ENCODE measurements at regions of chr3 and their contacts with region 1.

Region 1: GRCh38 chr3:184727357-184728009 is 15.6 kb upstream of the MAGEF1 start:
- DNase-seq: peak in 8 of 9 donors; percentile 12 to 45 (median 34)
- ATAC-seq: peak; percentile 85
- H3K4me3 ChIP-seq: no peak overlapping the region
- H3K4me3 Mint-ChIP-seq: no peak overlapping the region
- H3K27ac ChIP-seq: no peak overlapping the region
- H3K27ac Mint-ChIP-seq: peak overlapping the region in 2 of 9 donors; percentile 37 to 44
- H3K4me1 ChIP-seq: no peaks in the 10 kb centered on the region
- H3K4me1 Mint-ChIP-seq: peaks cover 0 to 4% (median 0%) of the 10 kb centered on the region in 7 donors
- H3K27me3 ChIP-seq: no peaks in the 10 kb centered on the region
- H3K27me3 Mint-ChIP-seq: peaks cover 0 to 39% (median 6%) of the 10 kb centered on the region in 5 donors

Region 2: DNA sequence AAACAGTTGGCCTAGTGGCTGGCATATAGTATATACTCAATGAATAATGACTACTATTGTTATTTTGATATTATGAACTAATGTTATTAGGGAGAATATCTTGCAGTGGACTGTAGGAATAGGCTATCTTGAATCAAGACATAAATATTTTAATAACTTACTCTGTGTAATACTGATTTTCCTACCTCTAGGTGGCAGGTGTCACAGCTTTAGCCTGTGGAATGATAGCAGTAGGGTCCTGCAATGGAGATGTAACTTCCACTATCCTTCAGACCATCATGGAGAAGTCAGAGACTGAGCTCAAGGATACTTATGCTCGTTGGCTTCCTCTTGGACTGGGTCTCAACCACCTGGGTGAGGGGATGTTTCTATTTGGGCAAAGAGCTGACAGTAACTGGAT is 421.9 kb before region 1 on chr3:
- CTCF ChIA-PET with region 1: no interaction called
- POLR2A ChIA-PET with region 1: no interaction called
- intact Hi-C with region 1: no loop called
- DNase-seq: no peak
- ATAC-seq: peak; percentile 47
- H3K4me3 ChIP-seq: no peak overlapping the region
- H3K4me3 Mint-ChIP-seq: no peak overlapping the region
- H3K27ac ChIP-seq: no peak overlapping the region
- H3K27ac Mint-ChIP-seq: peak overlapping the region in 1 of 9 donors; percentile 48
- H3K4me1 ChIP-seq: peaks cover 0 to 3% of the 10 kb centered on the region in 2 donors
- H3K4me1 Mint-ChIP-seq: peaks cover 2 to 17% (median 12%) of the 10 kb centered on the region in 7 donors
- H3K27me3 ChIP-seq: no peaks in the 10 kb centered on the region
- H3K27me3 Mint-ChIP-seq: no peaks in the 10 kb centered on the region

Region 3: DNA sequence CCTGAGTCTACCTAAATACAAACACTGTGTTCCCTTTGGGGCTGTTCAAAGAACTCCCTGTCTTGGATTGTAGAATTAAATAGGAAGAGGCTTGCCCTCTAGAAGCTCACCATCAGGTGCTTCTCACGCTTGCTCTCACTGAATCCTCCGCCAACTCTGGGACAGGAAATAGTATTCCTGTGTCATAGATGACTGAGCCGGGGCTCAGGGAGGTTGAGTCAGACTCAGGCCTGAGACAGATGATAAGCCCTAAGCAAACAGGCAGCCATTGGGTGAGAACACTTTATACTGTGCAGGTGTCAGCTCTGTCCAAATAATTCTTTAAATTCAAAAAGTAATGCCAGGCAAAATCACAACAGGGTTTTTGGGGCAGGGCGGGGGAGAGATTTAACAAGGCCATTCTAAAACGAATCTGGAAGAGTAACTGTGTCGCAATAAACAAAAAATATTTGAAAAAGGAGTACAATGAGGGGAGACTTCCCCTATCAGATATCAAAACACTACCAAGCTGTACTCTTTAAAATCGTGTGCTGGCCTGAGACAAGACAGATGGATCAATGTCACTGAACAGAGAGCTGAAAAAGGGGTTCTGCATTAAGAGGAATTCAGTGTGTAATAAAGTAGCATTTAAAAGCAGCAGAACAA is 106.9 kb before region 1 on chr3:
- CTCF ChIA-PET with region 1: no interaction called
- POLR2A ChIA-PET with region 1: no interaction called
- intact Hi-C with region 1: no loop called
- DNase-seq: no peak
- ATAC-seq: peak; percentile 44
- H3K4me3 ChIP-seq: no peak overlapping the region
- H3K4me3 Mint-ChIP-seq: no peak overlapping the region
- H3K27ac ChIP-seq: no peak overlapping the region
- H3K27ac Mint-ChIP-seq: peak overlapping the region in 1 of 9 donors; percentile 22
- H3K4me1 ChIP-seq: peaks cover 11 to 12% of the 10 kb centered on the region in 2 donors
- H3K4me1 Mint-ChIP-seq: peaks cover 8 to 21% (median 14%) of the 10 kb centered on the region in 7 donors
- H3K27me3 ChIP-seq: no peaks in the 10 kb centered on the region
- H3K27me3 Mint-ChIP-seq: peaks cover 7 to 40% (median 11%) of the 10 kb centered on the region in 5 donors

Region 4: DNA sequence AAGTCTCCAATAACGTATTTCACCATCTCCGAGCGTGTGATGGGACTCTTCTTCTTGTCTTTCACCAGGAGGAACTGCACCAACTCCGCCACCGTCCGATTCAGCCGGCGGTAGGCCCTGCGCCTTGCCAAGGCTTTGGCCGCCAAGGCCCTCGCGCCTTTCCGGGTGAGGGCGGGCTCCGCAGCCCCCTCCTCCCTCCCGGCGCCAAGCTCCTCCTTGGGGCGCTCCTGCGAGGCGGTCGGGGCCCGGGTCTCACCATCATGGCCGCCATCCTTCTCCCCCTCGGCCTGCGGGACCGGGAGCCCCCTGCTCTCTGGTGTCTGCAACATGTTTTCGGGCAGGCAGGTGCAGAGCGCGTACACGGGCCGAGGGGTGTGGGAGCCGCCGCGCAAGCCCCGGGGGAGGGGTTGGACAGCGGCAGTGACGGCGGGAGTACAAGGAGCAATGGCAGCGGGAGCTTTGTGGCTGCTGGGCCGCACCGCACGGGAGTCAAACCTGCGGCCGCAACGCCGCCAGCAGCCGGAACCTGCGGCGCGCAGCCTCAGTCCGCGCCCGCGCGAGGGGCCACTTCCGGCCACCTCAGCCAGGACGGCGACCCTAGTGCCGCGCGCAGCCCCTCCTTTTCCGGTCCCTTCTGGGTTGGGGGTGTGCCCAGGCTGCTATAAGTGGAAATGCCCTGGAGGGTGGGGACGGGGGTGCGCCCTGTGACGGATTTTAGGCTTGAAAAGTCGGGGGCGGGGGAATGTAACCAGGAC is 15.8 kb before region 1 on chr3 and contains the start of gene MAGEF1:
- CTCF ChIA-PET with region 1: no interaction called
- POLR2A ChIA-PET with region 1: interaction called, 4 read pairs
- intact Hi-C with region 1: loop called (anchors 1 to 2 kb)
- DNase-seq: peak; percentile 34 to 78 (median 69)
- ATAC-seq: peak; percentile 87
- H3K4me3 ChIP-seq: peak within 1 kb of the TSS; percentile 70
- H3K4me3 Mint-ChIP-seq: peak within 1 kb of the TSS; percentile 81 to 99 (median 93)
- H3K27ac ChIP-seq: peak within 1 kb of the TSS; percentile 77
- H3K27ac Mint-ChIP-seq: peak within 1 kb of the TSS; percentile 69 to 99 (median 87)
- H3K4me1 ChIP-seq: peaks cover 10 to 17% of the 10 kb centered on the region in 2 donors
- H3K4me1 Mint-ChIP-seq: peaks cover 28 to 44% (median 34%) of the 10 kb centered on the region in 7 donors
- H3K27me3 ChIP-seq: no peaks in the 10 kb centered on the region
- H3K27me3 Mint-ChIP-seq: peaks cover 0 to 20% (median 0%) of the 10 kb centered on the region in 5 donors
- total RNA-seq, gene MAGEF1: 9.0 to 17.4 (median 13.3) TPM

Measured in naive thymus-derived CD4-positive, alpha-beta T cell (primary cell).